ENCODE measurements at regions of chr12 and their contacts with region 1.

Region 1: GRCh38 chr12:117367011-117367638 is 5.7 kb upstream of the NOS1 start:
- DNase-seq: no peak
- ATAC-seq: peak; percentile 64

Region 2: GRCh38 chr12:117236456-117237001 is 130.6 kb before region 1 on chr12:
- intact Hi-C with region 1: loop called (anchors 10 kb)
- DNase-seq: peak; percentile 86
- ATAC-seq: peak; percentile 42

Region 3: GRCh38 chr12:117587631-117588287 is 220.6 kb after region 1 on chr12:
- intact Hi-C with region 1: loop called (anchors 1 kb)
- DNase-seq: peak; percentile 72
- ATAC-seq: peak; percentile 46

Region 4: DNA sequence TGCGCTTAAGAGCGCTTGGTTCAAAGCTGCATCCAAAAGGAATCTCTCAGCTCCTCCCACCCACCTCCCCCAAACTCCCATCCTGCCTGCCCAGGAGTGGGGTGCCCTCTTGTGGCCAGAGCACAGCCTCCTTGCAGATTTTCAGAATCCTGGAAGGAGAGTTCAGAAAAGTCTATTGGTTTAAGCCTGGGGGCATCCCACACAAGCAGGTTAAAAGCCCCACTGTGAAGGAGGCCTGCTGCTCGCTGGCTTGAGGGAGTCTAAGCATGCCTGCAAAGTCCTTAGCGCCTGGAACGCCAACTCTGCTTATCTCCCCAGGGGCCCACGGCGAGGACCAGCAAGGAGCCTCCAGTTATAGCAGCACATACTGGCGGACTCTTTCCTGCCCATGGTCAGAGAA is 304.6 kb after region 1 on chr12:
- intact Hi-C with region 1: loop called (anchors 5 kb)
- DNase-seq: no peak
- ATAC-seq: no peak

Region 5: GRCh38 chr12:117836999-117837736 is 470.0 kb after region 1 on chr12:
- intact Hi-C with region 1: loop called (anchors 1 kb)
- DNase-seq: peak; percentile 82
- ATAC-seq: peak; percentile 52